RWPE1 (cell line): ENCODE measurements at regions of chr3 and their contacts with region 1.

Region 1: GRCh38 chr3:33372218-33373081 is 67.8 kb downstream of the UBP1 start:
- DNase-seq: peak; percentile 62
- H3K27ac ChIP-seq: no peak overlapping the region
- CTCF ChIP-seq: peak; percentile 91

Region 2: DNA sequence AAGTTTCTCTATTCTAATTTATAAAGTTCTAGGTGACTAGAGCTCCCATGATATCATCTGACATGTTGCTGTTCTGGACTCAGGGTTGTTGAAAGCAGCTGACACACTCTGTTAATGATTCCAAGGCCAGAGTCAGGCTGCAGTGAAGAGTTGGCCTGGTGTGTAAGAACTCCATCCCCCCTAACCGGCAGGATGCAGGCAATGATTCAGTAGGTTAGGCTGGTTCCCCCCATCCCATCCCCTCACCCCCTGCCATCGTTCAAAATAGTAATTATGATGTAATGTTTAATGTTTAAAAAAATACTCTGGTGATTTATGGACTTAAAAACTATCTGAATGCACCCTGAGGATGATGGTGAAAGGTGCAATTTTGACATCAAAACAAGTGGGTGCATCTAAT is 559.3 kb before region 1 on chr3:
- CTCF ChIA-PET with region 1: no interaction called
- POLR2A ChIA-PET with region 1: no interaction called
- DNase-seq: no peak
- H3K27ac ChIP-seq: no peak overlapping the region
- CTCF ChIP-seq: no peak

Region 3: DNA sequence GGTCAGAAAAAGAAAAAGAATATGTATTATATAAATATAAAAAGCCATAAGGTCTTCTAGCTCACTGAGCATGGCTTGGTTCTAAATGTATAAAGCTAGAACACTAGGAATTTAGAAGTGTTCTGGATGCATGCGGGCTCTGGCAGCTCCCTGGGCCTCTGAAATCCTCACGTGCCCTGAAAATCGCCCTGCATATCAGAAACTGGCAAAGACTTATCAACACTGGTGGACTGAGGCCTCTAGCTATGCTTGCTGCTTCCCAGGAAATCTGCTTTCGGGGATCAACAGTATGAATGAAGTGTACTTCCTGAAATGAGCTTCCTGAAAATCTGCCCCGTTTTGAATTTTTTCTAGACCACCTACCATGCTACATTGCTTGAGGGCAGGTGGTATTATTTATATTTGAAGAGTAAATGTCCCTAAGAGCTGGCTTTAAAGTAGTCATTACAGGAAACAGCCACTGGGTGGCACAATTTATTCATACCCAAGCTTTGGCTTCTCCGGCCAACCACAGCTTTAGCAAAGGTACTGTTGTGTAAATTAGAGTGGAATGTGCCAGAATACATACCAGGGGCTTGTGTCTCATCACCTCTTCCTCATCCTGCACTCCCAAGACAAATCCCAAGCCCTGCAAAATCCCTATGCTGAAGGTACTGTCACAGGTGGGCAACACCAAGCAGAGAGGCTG is 241.0 kb before region 1 on chr3:
- CTCF ChIA-PET with region 1: interaction called, 19 read pairs
- POLR2A ChIA-PET with region 1: no interaction called
- DNase-seq: peak; percentile 49
- H3K27ac ChIP-seq: 0 out of 2 replicates have a peak overlapping the region, but pooled peaks have one; percentile 14
- CTCF ChIP-seq: peak; percentile 68

Region 4: DNA sequence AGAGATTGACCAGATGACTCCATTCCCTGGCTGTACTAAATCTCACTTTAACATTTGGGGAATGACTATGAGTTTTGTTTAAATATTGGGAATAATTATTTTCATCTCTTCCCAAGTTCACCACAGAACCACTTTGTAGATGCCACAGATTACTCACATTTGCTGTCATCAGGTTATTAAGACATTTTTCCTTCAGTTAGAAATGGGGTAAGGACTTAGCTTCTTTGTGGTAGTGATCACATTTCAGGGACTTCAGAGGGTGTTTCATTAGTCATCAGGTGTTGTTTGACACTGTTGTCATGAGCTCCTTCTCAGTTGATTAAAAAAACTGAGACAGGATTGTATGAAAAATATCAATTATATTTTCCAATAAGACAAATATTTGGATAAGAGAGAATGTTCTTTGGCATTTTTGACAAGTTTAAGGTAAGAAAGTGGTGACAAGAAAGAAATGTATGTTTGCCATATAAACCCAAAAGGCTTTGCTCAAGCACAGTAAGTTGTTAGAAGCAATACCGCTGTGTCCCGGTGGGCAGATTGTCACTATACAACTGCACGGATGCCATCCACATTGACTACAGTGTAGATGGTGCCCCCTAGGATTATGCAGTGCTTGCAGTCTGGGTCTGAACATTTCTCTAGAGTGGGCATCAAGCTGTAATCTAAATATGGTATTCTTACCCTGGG is 72.9 kb before region 1 on chr3:
- CTCF ChIA-PET with region 1: no interaction called
- POLR2A ChIA-PET with region 1: no interaction called
- DNase-seq: peak; percentile 35
- H3K27ac ChIP-seq: peak overlapping the region; percentile 75
- CTCF ChIP-seq: no peak